ENCODE measurements at regions of chr19 and their contacts with region 1.

Region 1: DNA sequence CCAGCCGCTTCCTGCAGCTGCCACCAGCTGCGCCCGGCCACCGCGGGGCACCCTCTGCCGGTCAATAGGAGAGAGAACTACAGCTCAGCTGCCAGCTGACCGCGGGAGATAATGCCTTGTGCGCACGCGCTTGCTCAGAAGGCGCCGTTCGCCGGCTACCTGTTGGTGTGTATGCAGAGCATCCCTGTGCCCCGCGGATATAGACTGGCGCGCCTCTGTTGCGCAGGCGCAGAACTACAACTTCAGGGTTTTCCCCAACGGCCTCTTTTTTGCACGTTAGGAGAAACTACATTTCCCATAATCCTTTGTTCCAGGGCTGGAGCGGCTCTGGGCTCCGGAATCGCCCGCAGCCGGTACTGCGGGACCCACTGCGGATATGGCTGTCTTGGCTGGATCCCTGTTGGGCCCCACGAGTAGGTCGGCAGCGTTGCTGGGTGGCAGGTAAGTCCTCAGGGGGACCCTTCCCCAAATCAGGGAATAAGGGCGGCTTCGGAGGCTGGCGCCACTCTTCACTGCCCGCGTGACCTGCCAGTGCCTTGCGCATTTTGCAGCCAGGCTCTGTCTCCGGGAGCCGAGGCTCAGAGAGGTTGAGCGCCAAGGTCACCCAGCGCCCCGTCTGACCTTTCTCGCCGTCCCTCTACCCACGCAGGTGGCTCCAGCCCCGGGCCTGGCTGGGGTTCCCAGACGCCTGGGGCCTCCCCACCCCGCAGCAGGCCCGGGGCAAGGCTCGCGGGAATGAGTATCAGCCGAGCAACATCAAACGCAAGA is at the start of gene MRPL34:
- DNase-seq: peak; percentile 94 to 98 (median 97)
- H3K4me3 ChIP-seq: peak within 1 kb of the TSS; percentile 85 to 90
- H3K4me3 Mint-ChIP-seq: peak within 1 kb of the TSS; percentile 90 to 94 (median 92)
- H3K27ac ChIP-seq: peak within 1 kb of the TSS; percentile 85
- H3K27ac Mint-ChIP-seq: peak within 1 kb of the TSS; percentile 69 to 96 (median 89)
- H3K4me1 ChIP-seq: peaks cover 57% of the 10 kb centered on the region
- H3K4me1 Mint-ChIP-seq: peaks cover 26 to 73% (median 49%) of the 10 kb centered on the region in 4 donors
- H3K27me3 ChIP-seq: no peaks in the 10 kb centered on the region
- H3K27me3 Mint-ChIP-seq: no peaks in the 10 kb centered on the region
- total RNA-seq, gene MRPL34: 69.4 to 74.1 TPM

Region 2: DNA sequence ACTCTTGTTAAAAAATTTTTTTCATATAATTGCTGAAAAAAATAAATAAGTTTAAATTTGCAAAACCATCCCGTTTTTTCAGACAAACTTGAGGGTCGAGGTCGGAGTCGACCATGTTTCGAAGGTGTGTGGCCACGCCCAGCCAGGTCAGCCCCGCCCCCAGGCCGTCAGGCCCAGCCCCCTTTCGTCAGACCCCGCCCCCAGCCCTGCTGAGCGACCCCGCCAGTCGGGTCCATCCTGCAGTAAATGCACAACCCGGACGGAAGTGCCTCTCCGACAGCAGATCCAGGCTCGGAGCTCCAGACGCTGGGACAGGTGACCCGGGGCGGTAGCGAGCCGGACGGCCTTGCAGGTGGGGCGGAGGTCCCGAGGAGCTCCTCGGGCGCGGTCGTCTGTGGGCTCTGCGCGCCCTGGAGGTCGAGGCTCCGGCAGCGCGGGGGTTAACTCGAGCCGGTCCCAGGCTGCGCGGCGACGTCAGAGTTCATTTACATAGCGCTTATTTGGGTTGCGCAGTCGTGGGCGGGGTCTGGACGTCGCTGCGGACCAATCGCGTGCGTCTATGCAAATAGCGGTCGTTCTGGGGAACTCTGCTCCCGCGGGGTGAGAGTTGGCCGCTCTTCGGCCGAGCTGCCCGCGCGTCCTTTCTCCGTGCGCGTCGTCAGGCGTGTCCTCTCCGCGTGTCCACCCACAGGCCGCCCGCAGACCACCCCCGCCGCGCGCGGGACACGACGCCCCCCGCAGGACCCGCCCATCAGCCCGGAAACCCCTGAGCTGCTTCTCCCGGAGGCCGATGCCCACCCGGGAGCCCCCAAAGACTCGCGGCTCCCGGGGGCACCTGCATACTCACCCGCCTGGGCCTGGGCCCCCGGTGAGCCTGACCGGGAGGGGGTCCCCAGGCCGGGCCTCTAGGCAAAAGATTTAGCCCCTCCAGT is 79.4 kb before region 1 on chr19 and contains the start of gene OCEL1:
- CTCF ChIA-PET with region 1: no interaction called
- POLR2A ChIA-PET with region 1: interaction called, 6 read pairs
- intact Hi-C with region 1: loop called (anchors 1 kb)
- DNase-seq: peak; percentile 96 to 98 (median 97)
- H3K4me3 ChIP-seq: peak within 1 kb of the TSS; percentile 73 to 90
- H3K4me3 Mint-ChIP-seq: peak within 1 kb of the TSS; percentile 95 to 99 (median 95)
- H3K27ac ChIP-seq: peak within 1 kb of the TSS; percentile 73
- H3K27ac Mint-ChIP-seq: peak within 1 kb of the TSS; percentile 98 to 99 (median 98)
- H3K4me1 ChIP-seq: peaks cover 14% of the 10 kb centered on the region
- H3K4me1 Mint-ChIP-seq: peaks cover 4 to 19% (median 7%) of the 10 kb centered on the region in 4 donors
- H3K27me3 ChIP-seq: no peaks in the 10 kb centered on the region
- H3K27me3 Mint-ChIP-seq: no peaks in the 10 kb centered on the region
- total RNA-seq, gene OCEL1: 23.9 to 29.3 TPM

Region 3: GRCh38 chr19:17292286-17293097 is 13.2 kb before region 1 on chr19:
- CTCF ChIA-PET with region 1: interaction called, 33 read pairs
- POLR2A ChIA-PET with region 1: interaction called, 8 read pairs
- intact Hi-C with region 1: loop called (anchors 1 kb)
- DNase-seq: peak; percentile 77 to 85 (median 80)
- H3K4me3 ChIP-seq: peak overlapping the region; percentile 61 to 75
- H3K4me3 Mint-ChIP-seq: peak overlapping the region; percentile 88 to 92 (median 90)
- H3K27ac ChIP-seq: peak overlapping the region; percentile 20
- H3K27ac Mint-ChIP-seq: peak overlapping the region; percentile 47 to 89 (median 81)
- H3K4me1 ChIP-seq: peaks cover 6% of the 10 kb centered on the region
- H3K4me1 Mint-ChIP-seq: peaks cover 3 to 5% (median 4%) of the 10 kb centered on the region in 4 donors
- H3K27me3 ChIP-seq: no peaks in the 10 kb centered on the region
- H3K27me3 Mint-ChIP-seq: peaks cover 0 to 4% of the 10 kb centered on the region in 2 donors

Region 4: DNA sequence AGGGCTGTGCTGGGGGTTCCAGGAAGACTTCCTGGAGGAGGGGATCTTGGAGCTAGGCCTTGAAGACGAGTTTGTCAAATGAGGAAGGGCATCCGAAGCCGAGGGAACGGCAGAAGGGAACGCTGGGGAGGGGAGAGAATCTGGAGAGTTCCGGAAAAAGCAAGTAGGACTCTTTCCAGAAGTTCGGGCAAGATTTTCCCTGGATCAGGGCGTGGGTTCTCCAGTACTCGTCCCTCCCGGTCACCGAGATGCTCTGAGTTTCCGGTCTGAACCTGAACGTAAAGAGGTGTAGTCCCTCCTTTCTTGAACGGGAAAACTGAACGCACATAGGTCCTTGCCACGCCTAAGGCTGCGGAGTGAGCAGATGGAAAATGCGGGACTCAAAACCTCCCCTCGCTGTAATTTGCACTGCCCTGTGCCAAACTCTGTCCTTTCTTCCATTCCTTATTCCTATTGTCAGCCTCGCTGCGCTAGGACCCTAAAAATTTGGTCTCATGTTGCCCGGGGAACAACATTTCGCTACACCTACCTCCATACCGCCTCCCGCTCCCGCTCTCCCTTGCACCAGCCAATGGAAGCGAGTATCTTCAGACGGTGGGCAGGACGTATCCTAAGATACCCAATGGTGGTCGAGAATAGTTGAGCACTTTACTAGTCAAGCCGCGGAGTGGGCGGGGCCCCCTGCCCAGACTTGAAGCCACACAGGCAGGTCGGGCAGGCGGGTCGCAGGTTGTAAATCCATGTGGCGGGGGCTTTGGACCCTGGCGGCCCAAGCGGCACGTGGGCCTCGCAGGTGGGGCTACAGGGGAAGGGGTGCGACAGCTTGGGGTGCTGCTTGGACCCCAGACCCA is 31.4 kb after region 1 on chr19 and contains the start of gene GTPBP3:
- CTCF ChIA-PET with region 1: interaction called, 10 read pairs
- POLR2A ChIA-PET with region 1: interaction called, 64 read pairs
- intact Hi-C with region 1: loop called (anchors 1 kb)
- DNase-seq: peak; percentile 93 to 99 (median 97)
- H3K4me3 ChIP-seq: peak within 1 kb of the TSS; percentile 52 to 99
- H3K4me3 Mint-ChIP-seq: peak within 1 kb of the TSS; percentile 90 to 98 (median 94)
- H3K27ac ChIP-seq: peak within 1 kb of the TSS; percentile 84
- H3K27ac Mint-ChIP-seq: peak within 1 kb of the TSS; percentile 90 to 99 (median 97)
- H3K4me1 ChIP-seq: peaks cover 47% of the 10 kb centered on the region
- H3K4me1 Mint-ChIP-seq: peaks cover 18 to 53% (median 32%) of the 10 kb centered on the region in 4 donors
- H3K27me3 ChIP-seq: no peaks in the 10 kb centered on the region
- H3K27me3 Mint-ChIP-seq: no peaks in the 10 kb centered on the region
- total RNA-seq, gene GTPBP3: 53.7 to 58.4 TPM

Region 5: DNA sequence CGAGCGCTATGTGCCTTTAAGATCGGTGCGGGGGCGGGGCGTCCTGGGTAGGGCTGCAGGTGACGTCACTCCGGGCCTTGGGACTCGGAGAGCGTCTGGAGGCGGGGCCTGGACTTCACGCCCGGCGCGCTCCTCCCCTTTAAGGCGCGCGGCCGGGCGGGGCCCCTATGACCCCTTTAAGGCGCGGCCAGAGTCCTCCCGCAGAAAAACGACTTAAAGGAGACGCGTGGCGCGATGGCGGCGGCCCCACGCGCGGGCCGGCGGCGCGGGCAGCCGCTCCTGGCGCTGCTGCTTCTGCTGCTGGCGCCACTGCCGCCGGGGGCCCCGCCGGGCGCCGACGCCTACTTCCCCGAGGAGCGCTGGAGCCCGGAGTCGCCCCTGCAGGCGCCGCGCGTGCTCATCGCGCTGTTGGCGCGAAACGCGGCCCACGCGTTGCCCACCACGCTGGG is 249.8 kb after region 1 on chr19 and contains the start of gene COLGALT1:
- CTCF ChIA-PET with region 1: no interaction called
- POLR2A ChIA-PET with region 1: no interaction called
- intact Hi-C with region 1: loop called (anchors 1 kb)
- DNase-seq: peak; percentile 94 to 98 (median 95)
- H3K4me3 ChIP-seq: peak within 1 kb of the TSS; percentile 54 to 80
- H3K4me3 Mint-ChIP-seq: peak within 1 kb of the TSS; percentile 83 to 89 (median 86)
- H3K27ac ChIP-seq: peak within 1 kb of the TSS; percentile 62
- H3K27ac Mint-ChIP-seq: peak within 1 kb of the TSS in 6 of 7 donors; percentile 63 to 92 (median 76)
- H3K4me1 ChIP-seq: peaks cover 18% of the 10 kb centered on the region
- H3K4me1 Mint-ChIP-seq: peaks cover 8 to 25% (median 14%) of the 10 kb centered on the region in 4 donors
- H3K27me3 ChIP-seq: no peaks in the 10 kb centered on the region
- H3K27me3 Mint-ChIP-seq: no peaks in the 10 kb centered on the region
- total RNA-seq, gene COLGALT1: 68.3 to 74.7 TPM

Region 6: DNA sequence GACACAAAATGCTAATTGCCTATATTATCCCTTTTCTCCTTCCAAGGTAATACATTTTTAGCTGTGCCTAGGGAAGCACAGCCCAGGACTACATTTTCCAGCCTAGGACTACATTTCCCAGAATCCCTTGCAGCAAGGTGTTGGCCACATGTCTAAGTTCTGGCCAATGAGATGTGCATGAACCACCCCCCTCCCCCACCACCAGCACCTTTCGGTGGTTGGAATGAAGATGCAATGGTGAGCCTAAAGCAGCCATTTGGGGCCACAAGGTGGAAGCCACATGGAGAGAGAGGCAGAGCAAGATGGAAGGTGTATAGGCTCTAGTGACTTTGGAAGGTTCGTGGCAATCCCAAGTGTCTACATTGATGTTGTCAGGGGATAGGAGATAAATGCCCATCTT is 366.2 kb after region 1 on chr19:
- CTCF ChIA-PET with region 1: no interaction called
- POLR2A ChIA-PET with region 1: no interaction called
- intact Hi-C with region 1: no loop called
- DNase-seq: peak in 1 of 5 donors; percentile 7
- H3K4me3 ChIP-seq: no peak overlapping the region
- H3K4me3 Mint-ChIP-seq: no peak overlapping the region
- H3K27ac ChIP-seq: no peak overlapping the region
- H3K27ac Mint-ChIP-seq: no peak overlapping the region
- H3K4me1 ChIP-seq: no peaks in the 10 kb centered on the region
- H3K4me1 Mint-ChIP-seq: no peaks in the 10 kb centered on the region
- H3K27me3 ChIP-seq: no peaks in the 10 kb centered on the region
- H3K27me3 Mint-ChIP-seq: peaks cover 9 to 13% of the 10 kb centered on the region in 2 donors

Measured in CD4-positive, alpha-beta memory T cell (primary cell).